Gastrocnemius medialis (tissue), 4 donors: ENCODE measurements at regions of chr1 and their contacts with region 1.

Region 1: GRCh38 chr1:225809842-225810578 is at the start of gene EPHX1:
- DNase-seq: peak; percentile 82 to 85
- ATAC-seq: peak; percentile 73 to 80
- H3K4me3 ChIP-seq: peak within 1 kb of the TSS; percentile 69 to 89 (median 75)
- H3K27ac ChIP-seq: peak within 1 kb of the TSS; percentile 94 to 97 (median 96)
- H3K4me1 ChIP-seq: peaks cover 39 to 50% of the 10 kb centered on the region in 2 donors
- H3K27me3 ChIP-seq: no peaks in the 10 kb centered on the region
- CTCF ChIP-seq: peak; percentile 25 to 55 (median 43)
- POLR2A ChIP-seq: peak; percentile 82 to 91
- total RNA-seq, gene EPHX1: 65.7 to 155 (median 108) TPM

Region 2: DNA sequence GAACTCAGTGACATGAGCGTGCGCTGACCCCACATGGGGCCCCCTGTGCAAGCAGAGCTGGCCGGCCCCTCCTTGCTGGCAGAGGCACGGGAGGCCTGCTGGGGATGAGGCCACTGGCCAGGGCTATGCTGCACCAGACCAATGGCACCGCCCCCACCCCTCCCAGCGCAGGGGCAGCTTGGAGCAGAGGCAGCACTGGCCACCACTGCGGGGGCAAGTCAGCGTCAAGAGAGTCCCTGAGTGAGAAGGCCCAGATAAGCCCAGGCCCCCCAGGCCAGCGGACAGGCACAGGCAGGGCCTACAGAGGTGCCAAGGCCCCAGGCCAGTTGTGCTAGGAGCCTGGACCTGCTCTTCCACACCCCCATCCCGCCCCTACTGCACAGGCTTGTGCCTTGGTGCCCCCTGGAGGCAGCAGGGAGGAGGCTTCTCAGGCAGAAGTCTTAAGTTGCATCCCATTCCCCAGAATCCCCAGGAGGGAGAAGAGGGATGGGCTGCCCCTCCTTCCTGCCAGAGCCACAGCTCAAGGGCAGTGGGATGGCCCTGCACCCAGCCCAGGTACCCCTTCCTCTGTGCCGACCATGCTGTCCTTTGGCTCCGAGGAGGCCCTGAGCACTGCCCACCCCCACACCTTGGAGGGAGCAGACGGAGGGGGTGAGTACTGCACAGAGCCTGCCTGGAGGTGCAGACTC is 35.7 kb after region 1 on chr1:
- in situ Hi-C with region 1: no loop called
- intact Hi-C with region 1: loop called (anchors 5 kb)
- DNase-seq: peak; percentile 52 to 74
- ATAC-seq: peak; percentile 49 to 83
- H3K4me3 ChIP-seq: no peak overlapping the region
- H3K27ac ChIP-seq: peak overlapping the region; percentile 15 to 61 (median 38)
- H3K4me1 ChIP-seq: peaks cover 3 to 5% of the 10 kb centered on the region in 2 donors
- H3K27me3 ChIP-seq: no peaks in the 10 kb centered on the region
- CTCF ChIP-seq: peak; percentile 62 to 83 (median 79)
- POLR2A ChIP-seq: no peak

Region 3: DNA sequence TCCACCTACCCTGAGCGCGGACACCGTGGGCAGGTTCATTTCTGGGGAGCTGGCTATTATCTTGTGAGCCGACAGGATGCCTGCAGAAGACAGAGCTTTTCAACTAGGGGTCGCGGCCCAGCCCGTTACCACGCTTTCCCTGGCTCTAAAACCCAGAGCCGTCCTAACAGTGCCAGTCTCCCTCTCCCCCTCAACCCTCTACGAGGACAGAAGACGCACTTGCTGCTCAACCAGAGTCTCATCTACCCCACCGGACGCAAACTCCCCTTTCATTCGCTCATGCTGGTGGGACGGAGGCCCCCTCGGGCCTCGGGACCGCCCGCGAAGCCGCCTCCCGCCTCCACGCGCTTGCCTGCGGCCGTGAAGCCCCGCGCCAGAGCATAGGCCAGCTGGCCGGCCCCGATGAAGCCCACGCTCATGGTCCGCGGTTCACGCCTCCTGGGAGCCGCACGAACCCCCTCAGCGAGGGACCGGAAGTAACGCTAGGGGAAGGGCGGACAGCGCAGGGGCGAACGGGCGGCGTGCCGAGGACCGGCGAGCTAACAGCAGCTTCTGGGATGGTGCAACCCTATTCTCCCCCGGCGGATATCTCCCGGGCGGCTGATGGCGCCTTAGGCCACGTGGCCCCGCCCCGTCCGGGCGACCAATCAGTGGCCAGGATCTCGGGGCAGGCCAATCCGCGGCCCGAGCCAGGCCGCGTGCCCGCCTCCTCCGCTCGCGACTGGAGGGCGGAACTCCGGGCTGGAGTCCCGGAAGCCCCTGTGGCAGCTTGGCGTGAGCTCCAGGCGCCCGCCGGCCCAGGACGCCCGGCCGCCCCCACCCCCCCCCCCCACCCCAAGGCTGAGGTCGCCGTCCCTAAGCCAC is 113.9 kb after region 1 on chr1 and contains the start of gene PYCR2:
- in situ Hi-C with region 1: no loop called
- intact Hi-C with region 1: loop called (anchors 2 kb)
- DNase-seq: peak; percentile 91 to 97
- ATAC-seq: peak; percentile 96 to 97
- H3K4me3 ChIP-seq: peak within 1 kb of the TSS; percentile 93 to 100 (median 98)
- H3K27ac ChIP-seq: peak within 1 kb of the TSS; percentile 95 to 100 (median 98)
- H3K4me1 ChIP-seq: peaks cover 15 to 16% of the 10 kb centered on the region in 2 donors
- H3K27me3 ChIP-seq: no peaks in the 10 kb centered on the region
- CTCF ChIP-seq: no peak
- POLR2A ChIP-seq: peak; percentile 75 to 87
- total RNA-seq, gene PYCR2: 31.9 to 50.3 (median 42.5) TPM